ENCODE measurements at regions of chr15 and their contacts with region 1.

Region 1: GRCh38 chr15:45279024-45279698 is 27.1 kb downstream of the SLC28A2 start:
- DNase-seq: peak; percentile 97 to 99 (median 98)
- ATAC-seq: peak; percentile 100
- H3K4me3 ChIP-seq: peak overlapping the region; percentile 25 to 74 (median 68)
- H3K27ac ChIP-seq: peak overlapping the region; percentile 60 to 93 (median 86)
- H3K4me1 ChIP-seq: peaks cover 0 to 18% (median 8%) of the 10 kb centered on the region in 12 donors
- H3K27me3 ChIP-seq: no peaks in the 10 kb centered on the region
- CTCF ChIP-seq: no peak
- POLR2A ChIP-seq: peak in 1 of 2 donors; percentile 87

Region 2: DNA sequence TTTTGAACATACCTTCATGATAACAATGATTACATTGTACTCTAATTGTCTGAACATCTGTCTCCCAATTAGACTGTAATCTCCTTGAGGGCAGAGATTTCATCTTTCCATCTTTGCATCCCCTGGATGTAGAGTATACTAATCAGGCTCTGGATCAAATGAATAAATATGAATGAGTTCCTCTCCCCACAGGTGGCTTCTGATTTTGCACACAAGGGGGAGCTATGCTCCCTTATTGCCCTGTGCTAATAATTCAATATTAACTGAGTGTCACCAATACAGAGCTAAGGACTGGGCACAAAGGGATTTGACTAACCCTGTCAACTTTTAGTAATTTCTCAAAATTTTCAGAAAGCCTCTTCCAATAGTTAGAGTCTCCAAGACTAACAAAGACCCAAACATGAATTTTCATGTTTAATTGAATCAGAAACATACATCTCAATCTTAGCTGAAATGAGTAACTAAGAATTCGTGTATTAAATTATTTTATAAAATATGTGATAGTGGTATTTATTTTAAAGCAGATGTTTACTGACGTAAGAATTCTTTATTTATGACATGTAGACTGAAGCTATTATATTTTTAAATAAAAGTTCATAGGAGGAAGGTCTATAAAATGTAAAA is 152.5 kb before region 1 on chr15:
- intact Hi-C with region 1: loop called in 1 of 10 experiments (anchors 2 kb)
- DNase-seq: no peak
- ATAC-seq: no peak
- H3K4me3 ChIP-seq: no peak overlapping the region
- H3K27ac ChIP-seq: no peak overlapping the region
- H3K4me1 ChIP-seq: peaks cover 0 to 14% (median 0%) of the 10 kb centered on the region in 12 donors
- H3K27me3 ChIP-seq: peaks cover 6 to 67% (median 28%) of the 10 kb centered on the region in 9 donors
- CTCF ChIP-seq: peak; percentile 32 to 64 (median 55)
- POLR2A ChIP-seq: no peak

Region 3: DNA sequence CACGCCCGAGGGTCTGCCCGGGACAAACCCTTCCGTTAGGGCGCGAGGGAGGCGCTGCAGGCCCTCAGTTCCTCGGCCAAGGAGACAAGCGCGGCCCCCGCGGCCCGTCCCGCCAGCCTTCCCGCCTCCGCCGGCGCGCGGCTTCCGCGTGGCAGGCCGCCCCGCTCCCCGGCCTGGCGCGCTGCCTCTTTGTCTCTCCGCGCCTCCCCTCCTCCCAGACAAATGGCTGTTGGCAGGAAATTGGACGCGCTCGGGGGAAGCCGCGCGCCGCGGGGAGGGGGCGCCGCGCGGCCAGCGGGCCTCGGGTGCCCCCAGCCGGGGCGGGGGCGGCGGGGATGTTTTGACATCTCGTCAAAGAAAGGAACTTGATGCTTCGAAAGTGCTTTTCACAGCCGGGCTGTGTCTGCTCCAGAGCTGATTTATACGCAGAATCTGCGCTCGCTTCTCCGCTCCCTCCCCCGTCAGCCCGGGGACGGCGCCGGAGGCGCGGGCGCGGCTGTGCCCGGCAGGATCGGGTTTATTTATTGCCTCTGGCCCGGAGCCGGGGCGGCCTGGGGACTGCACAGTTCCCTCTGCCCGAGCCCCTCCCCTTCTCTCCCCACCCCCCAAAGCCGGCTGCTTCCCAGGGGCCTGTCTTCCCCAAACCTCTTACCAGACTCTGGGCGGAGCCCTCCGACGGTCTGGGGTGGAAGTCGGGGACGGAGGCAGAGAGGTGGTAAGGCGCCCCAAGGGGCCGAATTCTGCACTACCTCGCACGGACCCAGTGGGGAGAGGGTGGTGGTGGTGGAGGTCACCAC is 112.1 kb before region 1 on chr15:
- intact Hi-C with region 1: loop called in 2 of 10 experiments (anchors 2 kb)
- DNase-seq: peak; percentile 85 to 93 (median 91)
- ATAC-seq: peak; percentile 67 to 87 (median 85)
- H3K4me3 ChIP-seq: peak overlapping the region; percentile 59 to 93 (median 76)
- H3K27ac ChIP-seq: peak overlapping the region; percentile 94 to 100 (median 99)
- H3K4me1 ChIP-seq: peaks cover 0 to 31% (median 14%) of the 10 kb centered on the region in 12 donors
- H3K27me3 ChIP-seq: no peaks in the 10 kb centered on the region
- CTCF ChIP-seq: peak; percentile 32 to 70 (median 58)
- POLR2A ChIP-seq: peak in 1 of 2 donors; percentile 39

Region 4: DNA sequence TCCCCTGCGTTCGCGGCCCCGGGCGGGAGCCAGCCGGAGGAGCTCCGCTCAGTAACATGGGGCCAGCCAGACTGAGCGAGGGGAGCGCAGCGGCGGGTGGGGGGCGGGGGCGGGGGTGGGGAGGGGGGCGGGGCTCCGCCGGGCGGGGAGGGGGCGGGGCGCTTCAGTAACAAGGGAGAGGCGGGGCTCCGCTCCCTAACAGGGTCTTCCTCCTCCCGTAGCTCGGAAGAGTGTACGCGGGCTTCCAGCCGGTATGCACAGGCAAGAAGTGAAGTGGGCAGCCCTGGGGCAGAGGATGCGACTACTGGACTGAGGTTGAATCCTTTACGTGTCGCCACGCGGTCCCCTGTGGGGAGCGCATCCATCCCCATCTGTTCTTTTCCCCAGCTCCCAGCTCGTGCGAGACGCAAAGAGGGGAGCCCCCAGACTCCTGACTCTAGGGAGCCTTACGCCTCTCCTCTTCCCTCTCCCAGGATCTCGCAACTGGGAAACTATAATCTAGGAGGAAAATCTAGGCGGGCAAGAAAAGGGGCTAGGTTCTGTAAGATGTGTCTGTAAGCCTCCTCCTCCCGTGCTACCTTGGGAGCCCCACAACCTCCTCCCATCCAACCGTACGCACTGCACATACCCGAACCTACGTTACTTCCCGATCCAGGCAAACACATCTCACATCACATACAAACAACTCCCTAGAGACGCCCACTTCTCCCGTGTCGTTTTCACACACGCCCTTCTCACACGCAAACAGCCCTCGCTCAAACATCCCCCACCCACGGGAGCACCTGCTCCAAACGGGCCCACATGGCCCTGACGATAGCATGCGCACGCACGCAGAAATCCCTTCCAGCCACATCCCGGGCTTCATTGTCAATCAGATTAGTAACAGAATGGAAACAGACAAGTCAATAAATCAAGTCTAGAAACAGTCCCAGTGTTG is 91.0 kb before region 1 on chr15 and contains the start of gene SHF:
- intact Hi-C with region 1: no loop called
- DNase-seq: peak in 4 of 5 donors; percentile 61 to 79 (median 68)
- ATAC-seq: peak; percentile 62 to 83 (median 75)
- H3K4me3 ChIP-seq: peak within 1 kb of the TSS; percentile 55 to 87 (median 72)
- H3K27ac ChIP-seq: peak within 1 kb of the TSS; percentile 17 to 93 (median 66)
- H3K4me1 ChIP-seq: peaks cover 0 to 32% (median 9%) of the 10 kb centered on the region in 12 donors
- H3K27me3 ChIP-seq: peaks cover 0 to 10% (median 0%) of the 10 kb centered on the region in 9 donors
- CTCF ChIP-seq: no peak
- POLR2A ChIP-seq: peak in 1 of 2 donors; percentile 23
- total RNA-seq, gene SHF: 2.4 to 7.9 (median 3.9) TPM

Region 5: DNA sequence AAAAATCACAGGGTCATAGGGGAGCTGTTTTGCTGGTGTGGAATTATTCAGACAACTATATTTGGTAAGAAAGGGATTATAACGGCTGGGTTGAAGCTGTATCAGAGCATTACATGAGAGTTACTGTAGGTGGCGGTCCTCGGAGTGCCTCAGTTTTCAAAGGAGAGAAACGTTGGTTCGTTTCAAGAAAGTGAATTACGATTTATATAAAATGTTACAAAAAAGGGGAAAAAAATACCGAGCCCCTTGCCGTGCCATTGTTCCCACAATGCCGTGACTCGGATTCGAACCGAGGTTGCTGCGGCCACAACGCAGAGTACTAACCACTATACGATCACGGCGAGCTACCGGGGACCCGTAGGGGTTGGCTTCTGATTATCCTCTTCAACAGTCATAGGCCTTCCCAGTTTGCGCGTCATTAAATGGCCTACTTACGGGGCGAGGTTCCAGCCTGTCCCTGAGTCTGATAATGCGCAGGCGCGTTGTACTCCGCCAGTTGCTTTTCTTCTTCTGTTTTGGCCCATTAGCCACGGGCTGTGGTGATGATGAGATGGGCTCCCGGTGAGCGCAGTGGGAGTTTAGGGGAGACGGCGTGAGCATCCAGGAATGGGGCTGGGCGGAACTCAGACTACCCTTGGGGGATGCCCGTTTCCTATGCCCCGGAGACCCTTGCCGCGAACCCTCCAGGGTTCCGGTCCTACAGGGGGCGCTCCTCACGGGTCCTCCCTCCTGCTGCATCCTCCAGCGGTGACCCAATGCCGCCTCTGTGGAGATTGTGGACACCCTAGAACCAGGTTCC is 80.6 kb before region 1 on chr15:
- intact Hi-C with region 1: loop called in 4 of 10 experiments (anchors 2 kb)
- DNase-seq: peak; percentile 92 to 97 (median 95)
- ATAC-seq: peak; percentile 77 to 84 (median 80)
- H3K4me3 ChIP-seq: peak overlapping the region; percentile 25 to 85 (median 70)
- H3K27ac ChIP-seq: peak overlapping the region; percentile 94 to 99 (median 98)
- H3K4me1 ChIP-seq: peaks cover 0 to 43% (median 6%) of the 10 kb centered on the region in 12 donors
- H3K27me3 ChIP-seq: no peaks in the 10 kb centered on the region
- CTCF ChIP-seq: peak in 11 of 12 donors; percentile 52 to 92 (median 71)
- POLR2A ChIP-seq: peak in 1 of 2 donors; percentile 96

Region 6: DNA sequence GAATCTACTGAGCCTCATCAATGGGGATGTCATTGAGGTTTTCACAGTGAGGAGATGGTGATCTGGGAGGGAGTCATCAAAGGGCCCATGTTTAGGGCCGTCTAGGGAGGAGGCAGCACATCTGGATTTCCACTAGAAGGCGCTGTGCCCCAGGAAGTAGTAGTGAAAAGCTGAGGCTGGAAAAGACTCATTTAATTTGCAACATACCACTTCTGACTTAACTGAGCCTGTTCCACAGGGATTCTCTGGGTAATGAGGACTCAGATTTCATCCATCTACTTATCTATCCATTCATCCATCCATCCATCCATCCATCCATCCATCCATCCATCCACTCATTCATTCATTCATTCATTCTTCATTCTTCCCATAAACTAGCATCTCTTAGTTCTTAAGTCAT is 74.0 kb before region 1 on chr15:
- intact Hi-C with region 1: loop called in 7 of 10 experiments (anchors 2 to 5 kb)
- DNase-seq: peak in 3 of 5 donors; percentile 43 to 60 (median 48)
- ATAC-seq: no peak
- H3K4me3 ChIP-seq: no peak overlapping the region
- H3K27ac ChIP-seq: no peak overlapping the region
- H3K4me1 ChIP-seq: peaks cover 0 to 36% (median 0%) of the 10 kb centered on the region in 12 donors
- H3K27me3 ChIP-seq: no peaks in the 10 kb centered on the region
- CTCF ChIP-seq: peak; percentile 65 to 80 (median 72)
- POLR2A ChIP-seq: no peak

Region 7: DNA sequence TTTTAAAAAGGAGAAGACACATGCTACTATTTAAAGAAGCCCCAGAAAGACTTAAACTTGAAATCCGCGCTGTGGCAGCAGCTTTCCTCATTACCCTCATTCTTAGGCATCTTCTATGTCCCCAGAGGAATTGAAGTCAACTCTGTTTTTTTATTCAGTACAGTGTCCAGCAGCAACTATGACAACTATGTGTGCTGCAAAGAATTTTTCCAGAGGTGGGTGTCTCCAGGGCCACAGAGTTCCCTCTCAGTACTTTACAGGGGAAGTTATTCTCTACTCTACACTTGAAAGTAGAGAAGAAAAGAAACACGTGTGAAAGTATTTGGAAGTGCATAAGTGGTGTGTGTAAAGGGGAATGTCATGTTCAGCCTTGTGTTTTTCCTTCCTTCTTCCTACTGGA is 67.2 kb after region 1 on chr15:
- intact Hi-C with region 1: no loop called
- DNase-seq: peak in 1 of 5 donors; percentile 32
- ATAC-seq: peak in 2 of 4 donors; percentile 36 to 41
- H3K4me3 ChIP-seq: no peak overlapping the region
- H3K27ac ChIP-seq: no peak overlapping the region
- H3K4me1 ChIP-seq: peaks cover 0 to 10% (median 0%) of the 10 kb centered on the region in 12 donors
- H3K27me3 ChIP-seq: peaks cover 0 to 5% (median 0%) of the 10 kb centered on the region in 9 donors
- CTCF ChIP-seq: peak in 1 of 12 donors; percentile 4
- POLR2A ChIP-seq: no peak

Measured in heart left ventricle (tissue), 16 donors.